Naive thymus-derived CD8-positive, alpha-beta T cell (primary cell): ENCODE measurements at regions of chr2 and their contacts with region 1.

Region 1: DNA sequence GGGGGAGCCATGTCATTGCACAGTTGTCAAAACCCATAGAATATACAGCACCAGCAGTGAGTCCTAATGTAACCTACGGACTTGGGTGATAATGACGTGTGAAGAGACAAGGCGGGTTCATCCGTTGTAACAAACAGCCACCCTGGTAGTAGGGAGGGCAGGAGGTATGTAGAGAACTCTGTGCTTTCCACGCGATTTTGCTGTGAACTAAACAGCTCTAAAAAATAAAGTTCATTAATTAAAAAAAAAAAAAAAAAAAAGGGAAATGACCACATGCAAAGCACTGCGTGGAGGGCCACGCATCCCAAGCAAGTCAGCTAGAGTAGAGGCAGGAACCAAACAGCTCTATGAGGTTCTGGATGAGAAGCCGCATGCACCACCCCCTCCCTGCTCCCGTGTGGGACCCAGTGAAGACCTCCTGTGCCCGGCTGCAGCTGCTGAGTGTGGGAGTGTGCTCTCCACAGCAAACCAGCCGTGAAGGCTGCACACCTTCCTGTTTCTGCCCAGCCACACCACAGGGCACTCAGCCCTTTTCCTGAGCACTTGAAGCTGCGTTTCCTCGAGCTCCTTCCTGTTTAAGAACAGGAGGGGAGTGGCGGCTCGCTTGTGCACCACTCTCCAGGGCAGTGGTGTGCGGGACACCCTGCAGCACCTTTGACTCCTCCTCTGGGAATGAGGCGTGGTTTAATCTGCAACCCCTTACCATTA is 65.6 kb downstream of the ODC1 start:
- DNase-seq: peak; percentile 23 to 82 (median 62)
- ATAC-seq: peak; percentile 86 to 95
- H3K4me3 Mint-ChIP-seq: peak overlapping the region; percentile 45 to 86 (median 74)
- H3K27ac Mint-ChIP-seq: peak overlapping the region; percentile 81 to 96 (median 91)
- H3K4me1 Mint-ChIP-seq: peaks cover 60 to 97% (median 96%) of the 10 kb centered on the region in 4 donors
- H3K27me3 Mint-ChIP-seq: no peaks in the 10 kb centered on the region

Region 2: DNA sequence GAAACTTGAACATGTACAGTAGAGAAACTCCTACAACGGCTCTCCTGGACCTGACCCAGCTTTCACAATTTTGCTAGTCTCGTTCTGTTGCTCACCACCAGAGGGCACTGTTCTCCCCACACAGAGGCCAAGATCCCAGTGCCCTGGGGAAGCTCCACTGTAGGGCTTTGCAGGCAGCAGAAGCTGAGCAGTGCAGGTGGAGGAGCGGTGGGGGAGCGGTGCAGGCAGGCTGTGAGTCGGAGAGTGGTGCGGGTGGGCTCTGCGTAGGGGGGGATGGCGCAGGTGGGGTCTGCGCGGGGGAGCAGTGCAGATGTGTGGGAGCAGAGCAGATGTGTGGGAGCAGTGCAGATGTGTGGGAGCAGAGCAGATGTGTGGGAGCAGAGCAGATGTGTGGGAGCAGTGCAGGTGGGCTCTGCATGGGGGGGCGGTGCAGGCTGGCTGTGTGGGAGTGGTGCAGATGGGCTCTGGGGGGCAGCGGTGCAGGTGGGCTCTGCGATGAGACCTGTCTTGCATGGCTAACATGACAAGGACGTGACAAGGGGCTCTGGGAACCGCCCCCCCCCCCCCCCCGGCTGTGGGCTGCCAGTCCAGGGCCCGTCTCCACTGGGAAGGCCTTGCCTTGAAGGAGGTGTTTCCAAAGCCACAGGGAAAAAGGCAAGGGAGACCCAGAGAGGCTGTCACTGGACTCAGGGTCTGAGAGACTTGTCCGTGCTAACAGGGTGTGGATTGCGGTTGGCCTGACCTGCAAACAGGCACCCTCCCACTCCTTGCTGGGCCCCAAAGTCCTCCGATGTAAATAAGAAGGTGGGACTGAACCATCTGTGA is 309.6 kb before region 1 on chr2:
- POLR2A ChIA-PET with region 1: no interaction called
- DNase-seq: peak; percentile 55 to 88 (median 76)
- ATAC-seq: peak; percentile 95 to 98
- H3K4me3 Mint-ChIP-seq: no peak overlapping the region
- H3K27ac Mint-ChIP-seq: peak overlapping the region in 1 of 10 donors; percentile 38
- H3K4me1 Mint-ChIP-seq: peaks cover 3 to 7% (median 4%) of the 10 kb centered on the region in 4 donors
- H3K27me3 Mint-ChIP-seq: peaks cover 28 to 57% (median 42%) of the 10 kb centered on the region in 5 donors

Region 3: GRCh38 chr2:10188216-10188615 is 194.3 kb before region 1 on chr2:
- POLR2A ChIA-PET with region 1: no interaction called
- DNase-seq: no peak
- ATAC-seq: no peak
- H3K4me3 Mint-ChIP-seq: no peak overlapping the region
- H3K27ac Mint-ChIP-seq: no peak overlapping the region
- H3K4me1 Mint-ChIP-seq: peaks cover 0 to 8% (median under 1%) of the 10 kb centered on the region in 4 donors
- H3K27me3 Mint-ChIP-seq: no peaks in the 10 kb centered on the region

Region 4: DNA sequence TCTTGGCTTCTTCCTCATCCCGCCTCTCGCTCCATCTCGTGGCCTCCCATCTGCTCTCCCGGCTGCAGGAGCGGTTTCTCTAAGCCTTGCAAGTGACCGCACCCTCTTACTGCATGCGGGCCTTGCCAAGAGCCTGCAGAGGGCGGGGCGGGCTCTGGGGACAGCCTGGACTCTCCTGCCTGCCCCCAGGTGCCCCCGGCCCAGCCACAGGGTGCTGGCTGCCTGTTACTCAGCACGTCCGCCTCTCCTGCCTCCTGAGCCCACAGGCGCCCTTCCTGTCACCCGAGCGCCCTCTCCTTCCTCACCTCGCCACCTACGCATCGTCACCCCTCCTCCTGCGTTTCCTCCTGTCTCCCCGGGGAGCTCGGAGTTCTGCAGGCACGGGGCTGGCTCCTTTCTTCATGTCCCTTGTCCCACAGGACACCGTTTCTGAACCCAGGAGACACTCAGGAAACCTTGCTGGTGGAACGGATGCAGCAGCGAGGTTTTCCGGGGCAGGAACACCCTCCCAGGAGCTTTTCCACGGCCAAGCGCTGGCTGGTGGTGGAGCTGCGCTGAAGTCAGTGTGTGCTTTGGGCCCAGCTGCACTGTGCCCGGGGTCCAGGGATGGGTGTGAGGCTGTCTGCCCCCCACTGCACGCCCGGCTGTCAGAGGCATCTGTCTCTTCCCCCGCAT is 51.3 kb before region 1 on chr2:
- POLR2A ChIA-PET with region 1: interaction called, 77 read pairs
- DNase-seq: peak; percentile 56 to 78 (median 65)
- ATAC-seq: peak; percentile 44 to 57
- H3K4me3 Mint-ChIP-seq: peak overlapping the region; percentile 87 to 100 (median 92)
- H3K27ac Mint-ChIP-seq: peak overlapping the region; percentile 94 to 99 (median 98)
- H3K4me1 Mint-ChIP-seq: peaks cover 65 to 94% (median 85%) of the 10 kb centered on the region in 4 donors
- H3K27me3 Mint-ChIP-seq: no peaks in the 10 kb centered on the region